ENCODE measurements at regions of chr7 and their contacts with region 1.

Region 1: GRCh38 chr7:140479062-140479738 is at the start of gene MKRN1:
- DNase-seq: peak; percentile 94
- H3K4me3 Mint-ChIP-seq: peak within 1 kb of the TSS; percentile 95
- H3K27ac Mint-ChIP-seq: peak within 1 kb of the TSS; percentile 91
- H3K4me1 Mint-ChIP-seq: peaks cover 29% of the 10 kb centered on the region
- H3K27me3 Mint-ChIP-seq: no peaks in the 10 kb centered on the region
- total RNA-seq, gene MKRN1: 77.6 to 78.6 TPM

Region 2: DNA sequence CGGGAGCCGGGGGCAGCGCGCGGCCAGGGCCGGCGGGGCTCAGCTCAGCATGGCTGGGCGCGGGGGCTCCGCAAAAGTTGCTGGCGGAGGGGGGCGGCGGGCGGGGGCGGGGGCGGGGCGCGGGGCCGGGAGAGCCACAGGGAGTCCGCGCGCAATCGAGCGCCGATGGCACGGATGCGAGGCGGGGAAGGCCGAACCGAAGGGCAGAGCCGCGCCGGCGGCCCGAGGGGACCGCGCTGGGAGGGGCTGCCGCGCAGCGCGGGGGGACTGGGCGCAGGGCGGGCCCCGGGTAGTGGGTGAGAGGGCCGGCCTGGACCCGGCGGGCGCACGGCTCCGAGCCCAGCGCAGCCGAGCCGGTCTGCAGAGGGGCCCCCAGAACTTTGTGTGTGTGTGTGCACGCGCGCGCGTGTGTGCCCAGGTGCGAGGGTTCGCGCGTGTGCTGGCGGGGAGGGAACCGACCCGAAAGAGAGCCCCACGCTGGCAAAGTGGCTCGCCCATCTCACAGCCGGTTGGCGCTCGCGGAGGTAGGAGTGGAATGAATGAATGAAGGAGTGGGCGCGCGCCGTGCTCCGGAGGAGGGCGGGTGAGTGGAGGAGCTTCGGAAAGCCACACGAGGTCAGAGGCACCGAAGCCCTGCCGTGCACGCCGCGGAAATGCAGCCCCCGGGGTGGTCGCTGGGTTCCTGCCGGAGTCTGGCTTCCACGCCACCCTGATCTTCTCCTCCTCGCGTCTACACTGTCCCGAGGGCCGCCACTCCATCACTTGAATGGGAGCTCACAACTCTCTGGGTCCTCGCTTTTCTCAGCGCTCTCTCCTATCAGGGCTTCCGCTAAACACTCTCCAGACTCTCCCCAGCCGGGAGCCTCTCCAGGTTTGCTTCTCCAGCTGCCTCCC is 701.0 kb before region 1 on chr7 and contains the start of gene HIPK2:
- CTCF ChIA-PET with region 1: no interaction called
- intact Hi-C with region 1: loop called (anchors 2 kb)
- DNase-seq: peak; percentile 68
- H3K4me3 Mint-ChIP-seq: peak within 1 kb of the TSS; percentile 96
- H3K27ac Mint-ChIP-seq: peak within 1 kb of the TSS; percentile 84
- H3K4me1 Mint-ChIP-seq: peaks cover 36% of the 10 kb centered on the region
- H3K27me3 Mint-ChIP-seq: peaks cover 14% of the 10 kb centered on the region
- total RNA-seq, gene HIPK2: 16.8 to 17.3 TPM

Region 3: DNA sequence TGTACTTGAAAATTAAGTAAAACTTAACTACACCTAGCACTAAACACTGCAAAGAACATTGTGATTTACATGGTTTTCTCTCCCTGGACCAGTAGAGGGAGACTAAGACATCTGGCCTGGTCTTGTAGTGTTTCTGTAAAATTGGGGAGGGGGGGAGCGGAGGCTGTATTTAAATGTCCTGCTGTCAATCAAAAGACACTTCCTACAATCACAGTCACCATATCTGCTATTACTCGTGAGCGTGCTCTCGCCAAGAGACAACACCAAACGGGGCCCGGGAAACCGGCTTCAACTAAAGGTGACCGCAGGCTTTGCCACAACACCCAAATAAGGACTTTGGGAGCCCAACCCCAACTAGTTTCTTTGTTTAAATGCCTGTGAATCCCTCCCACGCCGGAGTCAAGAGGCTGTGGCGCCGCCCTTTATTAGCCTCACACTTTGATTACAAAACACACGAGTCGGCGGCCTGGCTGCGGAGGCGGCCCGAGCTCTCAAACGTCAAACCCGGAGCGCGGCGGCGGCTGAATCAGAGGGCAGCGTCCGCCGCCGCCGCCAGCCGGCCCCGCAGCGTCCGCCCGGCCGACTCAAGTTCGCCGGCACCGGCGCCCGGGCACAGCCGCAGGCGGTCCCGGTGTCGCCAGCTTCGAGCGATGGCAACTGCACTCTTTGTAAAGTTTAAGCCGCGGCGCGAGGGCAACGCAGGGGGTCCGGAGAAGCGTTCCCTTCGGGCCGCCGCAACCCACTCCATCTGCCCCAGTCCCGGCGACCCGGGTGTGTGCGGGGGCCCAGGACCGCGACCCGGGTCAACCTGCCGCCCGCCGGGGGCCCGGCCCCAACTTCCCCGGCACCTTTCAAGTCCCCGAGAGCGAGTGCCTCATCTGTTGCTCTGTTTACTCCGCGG is 303.7 kb before region 1 on chr7:
- CTCF ChIA-PET with region 1: no interaction called
- intact Hi-C with region 1: loop called (anchors 1 kb)
- DNase-seq: peak; percentile 97
- H3K4me3 Mint-ChIP-seq: peak overlapping the region; percentile 81
- H3K27ac Mint-ChIP-seq: peak overlapping the region; percentile 89
- H3K4me1 Mint-ChIP-seq: peaks cover 44% of the 10 kb centered on the region
- H3K27me3 Mint-ChIP-seq: no peaks in the 10 kb centered on the region

Region 4: DNA sequence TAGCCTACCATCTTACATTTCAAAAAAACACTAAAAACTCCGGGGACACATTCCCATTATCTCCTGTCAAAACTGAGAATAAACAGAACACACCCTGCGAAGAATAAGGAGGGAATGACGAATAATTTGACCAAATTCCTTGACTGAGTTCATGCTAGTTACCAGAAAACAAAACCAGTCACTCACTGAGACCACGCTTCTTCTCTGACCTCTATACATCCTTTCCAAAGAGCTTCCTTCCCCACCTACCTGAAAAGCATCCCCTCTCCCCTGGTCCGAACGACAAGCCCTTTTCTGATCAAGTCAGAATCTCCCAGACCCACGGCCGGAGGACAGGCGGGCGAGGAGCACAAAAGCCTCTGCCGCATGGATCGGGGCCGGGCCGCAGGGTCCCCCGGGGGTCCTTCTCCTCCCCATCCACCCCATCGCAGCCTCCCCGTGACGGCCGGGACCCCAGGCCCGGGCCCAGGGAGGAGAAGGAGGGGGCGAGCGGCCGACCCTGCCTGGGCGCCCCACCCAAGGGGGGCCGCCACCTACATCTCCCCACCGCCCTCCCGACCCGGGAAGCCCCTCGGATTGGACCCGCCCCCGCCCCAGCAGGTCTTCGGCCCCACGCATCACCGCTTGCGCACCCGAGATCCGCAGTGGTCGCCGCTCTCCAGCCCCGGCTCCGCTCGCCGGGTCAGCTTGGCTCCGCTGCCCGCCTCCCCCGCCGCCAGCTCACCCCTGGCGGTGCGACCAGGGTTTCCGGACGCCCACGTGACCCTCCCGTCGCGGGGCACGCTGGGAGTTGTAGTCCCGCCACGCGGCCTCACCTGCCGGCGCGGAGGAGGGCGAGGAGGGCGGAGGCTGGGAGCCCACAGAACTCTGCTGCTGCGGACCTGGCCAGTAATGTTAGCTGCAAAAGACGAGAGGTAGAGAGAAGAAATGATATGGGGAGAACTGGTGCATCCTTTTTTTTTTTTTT is 81.1 kb before region 1 on chr7 and contains the start of gene SLC37A3:
- CTCF ChIA-PET with region 1: no interaction called
- intact Hi-C with region 1: loop called (anchors 1 kb)
- DNase-seq: peak; percentile 90
- H3K4me3 Mint-ChIP-seq: peak within 1 kb of the TSS; percentile 81
- H3K27ac Mint-ChIP-seq: peak within 1 kb of the TSS; percentile 69
- H3K4me1 Mint-ChIP-seq: peaks cover 26% of the 10 kb centered on the region
- H3K27me3 Mint-ChIP-seq: no peaks in the 10 kb centered on the region
- total RNA-seq, gene SLC37A3: 25.6 to 28.7 TPM

Region 5: GRCh38 chr7:140653319-140654108 is 174.3 kb after region 1 on chr7:
- CTCF ChIA-PET with region 1: interaction called, 4 read pairs
- intact Hi-C with region 1: loop called (anchors 1 kb)
- DNase-seq: peak; percentile 30
- H3K4me3 Mint-ChIP-seq: no peak overlapping the region
- H3K27ac Mint-ChIP-seq: no peak overlapping the region
- H3K4me1 Mint-ChIP-seq: peaks cover 15% of the 10 kb centered on the region
- H3K27me3 Mint-ChIP-seq: peaks cover 2% of the 10 kb centered on the region

Region 6: DNA sequence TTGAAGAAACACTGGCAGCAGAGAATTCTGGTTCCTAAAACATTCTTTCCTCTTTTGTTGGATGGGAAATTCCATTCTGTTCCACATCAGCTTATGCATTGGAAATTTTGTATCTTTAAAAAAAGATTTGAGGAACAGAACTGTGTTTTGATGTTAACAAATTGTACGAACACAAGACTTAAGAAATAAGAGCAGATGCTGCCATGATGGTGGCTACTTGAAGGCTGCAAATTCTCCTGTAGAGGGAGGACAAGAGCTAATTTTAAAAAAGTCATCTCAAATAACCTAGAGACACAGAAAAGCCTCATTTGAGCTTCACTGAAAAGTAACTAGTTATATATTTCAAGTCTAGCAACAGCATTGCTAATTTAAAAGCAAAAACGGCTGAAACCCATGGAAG is 247.1 kb after region 1 on chr7:
- CTCF ChIA-PET with region 1: no interaction called
- intact Hi-C with region 1: loop called (anchors 2 kb)
- DNase-seq: no peak
- H3K4me3 Mint-ChIP-seq: no peak overlapping the region
- H3K27ac Mint-ChIP-seq: no peak overlapping the region
- H3K4me1 Mint-ChIP-seq: peaks cover 17% of the 10 kb centered on the region
- H3K27me3 Mint-ChIP-seq: no peaks in the 10 kb centered on the region

Measured in activated naive CD4-positive, alpha-beta T cell treated with anti-CD3 and anti-CD28 coated beads for 36 hours (primary cell).